ENCODE measurements at regions of chr12 and their contacts with region 1.

Region 1: GRCh38 chr12:40224439-40225291 is at the start of gene LRRK2:
- DNase-seq: peak; percentile 94
- ATAC-seq: peak; percentile 81
- H3K4me3 ChIP-seq: peak within 1 kb of the TSS; percentile 63 to 99 (median 76)
- H3K4me3 Mint-ChIP-seq: peak within 1 kb of the TSS; percentile 94
- H3K27ac ChIP-seq: peak within 1 kb of the TSS; percentile 80 to 98
- H3K27ac Mint-ChIP-seq: peak within 1 kb of the TSS; percentile 97
- H3K4me1 ChIP-seq: peaks cover 36 to 46% of the 10 kb centered on the region in 2 donors
- H3K4me1 Mint-ChIP-seq: peaks cover 61% of the 10 kb centered on the region
- H3K27me3 ChIP-seq: no peaks in the 10 kb centered on the region
- H3K27me3 Mint-ChIP-seq: no peaks in the 10 kb centered on the region
- CTCF ChIP-seq: peak; percentile 9
- total RNA-seq, gene LRRK2: 56.5 and 60.2 TPM in 2 replicates

Region 2: DNA sequence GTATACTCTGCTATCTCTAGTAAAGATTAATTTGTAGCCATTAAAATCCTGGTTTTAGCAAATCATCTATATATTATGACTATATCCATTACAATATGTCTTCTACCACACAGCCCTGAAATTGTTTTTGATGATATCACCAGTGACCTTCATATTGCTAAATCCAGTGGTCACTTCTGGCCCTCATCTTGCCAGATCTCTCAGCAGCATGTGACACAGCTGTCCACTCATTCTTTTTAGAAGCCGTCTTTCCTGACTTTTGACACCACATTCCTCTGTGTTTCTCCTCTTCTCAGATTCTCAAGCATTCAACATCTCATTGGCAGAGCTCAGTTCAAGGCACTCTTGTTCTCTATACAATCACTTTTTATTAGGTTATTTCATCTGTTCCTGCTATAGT is 1374.2 kb before region 1 on chr12:
- CTCF ChIA-PET with region 1: no interaction called
- POLR2A ChIA-PET with region 1: no interaction called
- intact Hi-C with region 1: no loop called
- DNase-seq: no peak
- ATAC-seq: no peak
- H3K4me3 ChIP-seq: no peak overlapping the region
- H3K4me3 Mint-ChIP-seq: no peak overlapping the region
- H3K27ac ChIP-seq: no peak overlapping the region
- H3K27ac Mint-ChIP-seq: no peak overlapping the region
- H3K4me1 ChIP-seq: no peaks in the 10 kb centered on the region
- H3K4me1 Mint-ChIP-seq: no peaks in the 10 kb centered on the region
- H3K27me3 ChIP-seq: no peaks in the 10 kb centered on the region
- H3K27me3 Mint-ChIP-seq: no peaks in the 10 kb centered on the region
- CTCF ChIP-seq: no peak

Region 3: DNA sequence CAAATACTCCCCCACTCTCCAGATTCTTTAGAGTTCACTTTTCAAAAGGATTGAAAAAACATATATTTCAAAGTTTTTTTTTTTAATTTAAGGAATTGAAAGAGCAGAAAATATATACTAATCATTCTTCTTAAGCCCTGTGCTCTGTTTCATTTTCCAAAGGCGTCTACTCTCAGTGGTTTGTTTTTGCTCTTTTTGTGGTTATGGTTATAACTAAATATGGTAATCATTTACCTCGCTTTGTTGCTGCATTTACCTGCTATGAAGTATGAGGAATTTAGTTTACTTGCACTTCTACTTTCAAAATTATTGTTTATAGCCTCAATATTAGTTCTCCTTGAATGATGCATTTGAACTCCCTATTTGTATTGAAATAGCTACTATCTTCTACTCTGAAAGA is 55.8 kb before region 1 on chr12:
- CTCF ChIA-PET with region 1: interaction called, 3 read pairs
- POLR2A ChIA-PET with region 1: interaction called, 3 read pairs
- intact Hi-C with region 1: loop called (anchors 2 kb)
- DNase-seq: peak; percentile 51
- ATAC-seq: peak; percentile 67
- H3K4me3 ChIP-seq: peak overlapping the region in 3 of 5 experiments; percentile 8 to 31 (median 22)
- H3K4me3 Mint-ChIP-seq: peak overlapping the region; percentile 80
- H3K27ac ChIP-seq: no peak overlapping the region
- H3K27ac Mint-ChIP-seq: peak overlapping the region; percentile 68
- H3K4me1 ChIP-seq: peaks cover 11% of the 10 kb centered on the region in 2 donors
- H3K4me1 Mint-ChIP-seq: peaks cover 26% of the 10 kb centered on the region
- H3K27me3 ChIP-seq: no peaks in the 10 kb centered on the region
- H3K27me3 Mint-ChIP-seq: no peaks in the 10 kb centered on the region
- CTCF ChIP-seq: no peak

Region 4: DNA sequence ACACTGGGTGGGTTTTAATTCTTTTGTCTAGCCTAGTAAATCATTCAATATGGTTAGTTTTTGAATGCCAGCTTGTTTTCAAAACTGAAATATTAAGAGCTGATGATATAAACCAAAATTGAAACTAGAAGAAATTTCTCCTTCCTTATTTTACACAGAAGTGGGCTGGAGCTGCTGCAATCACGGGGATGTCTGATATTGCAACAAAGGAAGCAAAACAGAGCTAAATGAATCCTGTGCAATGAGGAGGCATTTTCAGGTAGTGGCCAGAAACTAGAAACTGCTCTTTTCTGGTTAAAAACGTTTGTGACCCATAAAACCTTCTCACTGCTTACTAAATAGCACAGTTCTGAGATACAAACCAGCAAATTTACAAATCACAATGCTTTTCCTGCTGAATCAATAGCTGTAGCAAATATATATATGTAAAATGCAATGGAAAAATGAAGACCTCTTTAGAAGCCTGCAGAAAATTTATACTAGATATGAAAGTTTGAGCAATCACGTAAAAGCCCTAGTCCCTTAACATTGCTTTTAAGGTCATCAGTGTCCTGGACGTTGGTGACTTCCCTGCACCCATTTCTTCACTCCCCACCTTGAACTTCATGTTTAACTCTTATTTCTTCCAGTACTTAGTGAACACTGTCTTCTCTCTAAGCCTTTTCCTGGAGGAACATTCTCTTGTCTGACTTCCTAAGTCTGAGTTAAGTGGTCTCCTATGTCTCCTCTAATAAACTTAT is 15.8 kb before region 1 on chr12:
- CTCF ChIA-PET with region 1: interaction called, 23 read pairs
- POLR2A ChIA-PET with region 1: interaction called, 12 read pairs
- intact Hi-C with region 1: loop called (anchors 1 kb)
- DNase-seq: peak; percentile 72
- ATAC-seq: peak; percentile 88
- H3K4me3 ChIP-seq: peak overlapping the region in 3 of 5 experiments; percentile 5 to 48 (median 36)
- H3K4me3 Mint-ChIP-seq: peak overlapping the region; percentile 65
- H3K27ac ChIP-seq: peak overlapping the region; percentile 64 to 84
- H3K27ac Mint-ChIP-seq: peak overlapping the region; percentile 88
- H3K4me1 ChIP-seq: peaks cover 27 to 29% of the 10 kb centered on the region in 2 donors
- H3K4me1 Mint-ChIP-seq: peaks cover 26% of the 10 kb centered on the region
- H3K27me3 ChIP-seq: no peaks in the 10 kb centered on the region
- H3K27me3 Mint-ChIP-seq: no peaks in the 10 kb centered on the region
- CTCF ChIP-seq: no peak

Region 5: DNA sequence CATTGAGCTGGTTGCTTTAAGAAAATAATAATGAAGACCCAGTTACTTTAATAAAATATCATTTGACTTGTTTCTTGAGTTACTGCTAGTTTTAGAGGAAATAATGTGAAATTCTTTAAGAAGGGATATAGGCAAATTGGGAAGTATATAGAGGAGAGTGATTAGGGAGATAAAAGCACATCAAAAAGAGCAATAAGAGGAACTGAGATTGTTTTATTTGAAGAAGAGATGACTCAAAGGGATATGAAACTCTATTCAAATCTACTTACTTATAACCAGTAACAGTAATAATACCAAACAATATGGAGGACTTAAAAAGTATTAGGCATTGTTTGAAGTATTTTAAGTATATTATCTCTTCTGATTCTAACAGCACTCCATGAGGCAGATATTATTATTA is 37.3 kb after region 1 on chr12:
- CTCF ChIA-PET with region 1: interaction called, 7 read pairs
- POLR2A ChIA-PET with region 1: interaction called, 5 read pairs
- intact Hi-C with region 1: loop called (anchors 1 kb)
- DNase-seq: peak; percentile 56
- ATAC-seq: peak; percentile 78
- H3K4me3 ChIP-seq: no peak overlapping the region
- H3K4me3 Mint-ChIP-seq: peak overlapping the region; percentile 44
- H3K27ac ChIP-seq: peak overlapping the region in 1 of 2 donors; percentile 32
- H3K27ac Mint-ChIP-seq: peak overlapping the region; percentile 0
- H3K4me1 ChIP-seq: peaks cover 20 to 32% of the 10 kb centered on the region in 2 donors
- H3K4me1 Mint-ChIP-seq: peaks cover 30% of the 10 kb centered on the region
- H3K27me3 ChIP-seq: no peaks in the 10 kb centered on the region
- H3K27me3 Mint-ChIP-seq: no peaks in the 10 kb centered on the region
- CTCF ChIP-seq: no peak

Region 6: DNA sequence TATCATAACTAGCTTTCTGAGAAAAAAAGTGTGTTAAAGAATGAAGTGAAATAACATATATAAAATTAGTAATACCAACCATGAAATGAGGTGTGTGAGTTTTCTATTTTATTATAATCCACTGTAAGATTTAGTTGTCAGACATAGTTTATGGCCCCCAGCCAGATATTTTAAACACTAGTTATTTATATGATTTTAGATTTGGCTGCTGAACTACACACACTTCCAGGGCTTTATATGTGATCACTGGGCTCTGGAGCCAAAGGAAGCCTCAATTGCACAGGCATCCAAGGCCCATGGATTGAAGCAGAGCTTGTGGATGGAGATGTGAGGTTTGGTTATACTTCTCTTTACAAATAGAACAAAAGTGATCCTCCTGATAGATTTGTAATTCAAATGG is 418.8 kb after region 1 on chr12:
- CTCF ChIA-PET with region 1: no interaction called
- POLR2A ChIA-PET with region 1: no interaction called
- intact Hi-C with region 1: no loop called
- DNase-seq: no peak
- ATAC-seq: no peak
- H3K4me3 ChIP-seq: no peak overlapping the region
- H3K4me3 Mint-ChIP-seq: no peak overlapping the region
- H3K27ac ChIP-seq: no peak overlapping the region
- H3K27ac Mint-ChIP-seq: no peak overlapping the region
- H3K4me1 ChIP-seq: no peaks in the 10 kb centered on the region
- H3K4me1 Mint-ChIP-seq: no peaks in the 10 kb centered on the region
- H3K27me3 ChIP-seq: no peaks in the 10 kb centered on the region
- H3K27me3 Mint-ChIP-seq: no peaks in the 10 kb centered on the region
- CTCF ChIP-seq: no peak

Region 7: GRCh38 chr12:40953076-40953475 is 728.4 kb after region 1 on chr12:
- CTCF ChIA-PET with region 1: no interaction called
- POLR2A ChIA-PET with region 1: no interaction called
- intact Hi-C with region 1: no loop called
- DNase-seq: no peak
- ATAC-seq: no peak
- H3K4me3 ChIP-seq: no peak overlapping the region
- H3K4me3 Mint-ChIP-seq: no peak overlapping the region
- H3K27ac ChIP-seq: no peak overlapping the region
- H3K27ac Mint-ChIP-seq: no peak overlapping the region
- H3K4me1 ChIP-seq: no peaks in the 10 kb centered on the region
- H3K4me1 Mint-ChIP-seq: no peaks in the 10 kb centered on the region
- H3K27me3 ChIP-seq: peaks cover 0 to 3% (median 0%) of the 10 kb centered on the region in 4 experiments
- H3K27me3 Mint-ChIP-seq: peaks cover 17% of the 10 kb centered on the region
- CTCF ChIP-seq: no peak